ENCODE measurements at regions of chr13 and their contacts with region 1.

Region 1: GRCh38 chr13:25874907-25875306 is 176.9 kb downstream of the SHISA2 start:
- DNase-seq: peak; percentile 87
- H3K4me3 Mint-ChIP-seq: peak overlapping the region; percentile 40
- H3K27ac Mint-ChIP-seq: peak overlapping the region; percentile 87
- H3K4me1 Mint-ChIP-seq: peaks cover 70% of the 10 kb centered on the region
- H3K27me3 Mint-ChIP-seq: no peaks in the 10 kb centered on the region

Region 2: DNA sequence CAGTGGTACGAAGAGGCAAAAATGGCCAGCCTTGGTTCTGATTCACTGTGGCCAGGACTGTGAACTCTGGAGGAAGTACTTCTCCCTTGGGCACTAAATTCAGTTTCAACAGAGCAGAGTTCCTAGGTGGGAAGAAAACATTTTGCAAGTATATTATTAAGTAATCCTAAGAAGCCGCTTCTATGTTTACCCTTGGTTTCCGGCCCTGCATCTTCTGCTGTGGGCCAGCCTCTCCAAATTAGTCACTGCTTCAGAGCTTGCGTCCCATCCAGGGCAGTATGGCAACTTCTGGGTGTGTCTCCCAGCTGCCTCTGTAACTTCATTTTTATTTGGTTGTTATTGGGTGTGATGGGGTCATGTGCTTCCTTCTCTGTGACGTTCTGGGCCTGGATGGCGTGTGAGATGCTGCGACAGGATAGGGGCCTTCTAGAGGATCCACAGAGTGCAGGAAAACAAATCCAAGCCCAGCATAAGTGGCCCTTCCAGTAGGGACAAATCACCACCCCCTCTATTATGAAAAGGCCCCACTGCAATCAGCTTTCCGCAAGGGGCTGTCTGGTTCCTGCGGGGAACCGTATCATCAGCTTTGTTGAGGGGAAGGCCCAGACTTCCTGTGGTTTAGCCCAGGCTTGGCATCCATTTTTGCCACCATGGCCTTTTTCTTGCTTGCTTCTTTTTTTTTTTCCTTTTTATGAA is 1620.6 kb before region 1 on chr13:
- CTCF ChIA-PET with region 1: no interaction called
- intact Hi-C with region 1: loop called (anchors 10 kb)
- DNase-seq: peak; percentile 79
- H3K4me3 Mint-ChIP-seq: peak overlapping the region; percentile 87
- H3K27ac Mint-ChIP-seq: peak overlapping the region; percentile 96
- H3K4me1 Mint-ChIP-seq: peaks cover 77% of the 10 kb centered on the region
- H3K27me3 Mint-ChIP-seq: no peaks in the 10 kb centered on the region

Region 3: GRCh38 chr13:25847145-25847544 is 27.8 kb before region 1 on chr13:
- CTCF ChIA-PET with region 1: no interaction called
- intact Hi-C with region 1: loop called (anchors 1 kb)
- DNase-seq: peak; percentile 22
- H3K4me3 Mint-ChIP-seq: no peak overlapping the region
- H3K27ac Mint-ChIP-seq: peak overlapping the region; percentile 22
- H3K4me1 Mint-ChIP-seq: peaks cover 35% of the 10 kb centered on the region
- H3K27me3 Mint-ChIP-seq: peaks cover under 1% of the 10 kb centered on the region

Region 4: GRCh38 chr13:25886438-25887214 is 11.7 kb after region 1 on chr13:
- CTCF ChIA-PET with region 1: no interaction called
- intact Hi-C with region 1: loop called (anchors 1 kb)
- DNase-seq: peak; percentile 51
- H3K4me3 Mint-ChIP-seq: no peak overlapping the region
- H3K27ac Mint-ChIP-seq: peak overlapping the region; percentile 16
- H3K4me1 Mint-ChIP-seq: peaks cover 66% of the 10 kb centered on the region
- H3K27me3 Mint-ChIP-seq: no peaks in the 10 kb centered on the region

Region 5: DNA sequence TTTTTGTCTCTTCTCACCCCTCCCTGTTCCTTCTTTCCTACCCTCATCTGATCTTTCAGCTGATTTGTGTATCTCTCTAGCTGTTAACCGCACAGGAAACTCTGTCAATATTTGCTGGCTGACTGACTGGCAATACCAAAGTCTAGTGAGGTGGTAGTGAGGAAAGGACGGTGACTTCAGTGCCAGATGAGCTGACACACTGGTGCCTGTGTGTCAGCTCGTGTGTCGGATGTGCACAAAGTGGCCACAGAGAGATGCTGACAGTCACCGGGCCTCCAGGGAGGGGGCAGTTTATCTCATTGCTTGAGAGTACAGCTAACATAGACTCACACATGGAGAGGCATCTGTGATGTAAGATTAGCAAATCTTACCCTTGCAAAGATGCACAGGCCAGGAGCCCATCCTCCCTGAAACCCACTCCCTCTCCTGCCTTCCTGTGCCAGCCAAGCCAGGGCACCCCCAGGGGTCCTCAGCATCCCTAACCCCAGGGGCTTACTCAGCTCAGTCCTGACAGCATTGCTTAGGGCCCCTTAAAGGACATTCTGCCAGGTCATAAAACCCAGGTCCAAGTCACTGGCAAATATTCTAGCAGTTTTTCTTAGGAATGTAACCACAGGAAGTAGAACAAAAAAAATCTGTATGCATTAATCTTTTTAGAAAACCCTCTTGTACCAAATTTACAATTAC is 96.7 kb after region 1 on chr13:
- CTCF ChIA-PET with region 1: no interaction called
- intact Hi-C with region 1: loop called (anchors 2 kb)
- DNase-seq: peak; percentile 76
- H3K4me3 Mint-ChIP-seq: no peak overlapping the region
- H3K27ac Mint-ChIP-seq: peak overlapping the region; percentile 46
- H3K4me1 Mint-ChIP-seq: peaks cover 42% of the 10 kb centered on the region
- H3K27me3 Mint-ChIP-seq: no peaks in the 10 kb centered on the region

Region 6: DNA sequence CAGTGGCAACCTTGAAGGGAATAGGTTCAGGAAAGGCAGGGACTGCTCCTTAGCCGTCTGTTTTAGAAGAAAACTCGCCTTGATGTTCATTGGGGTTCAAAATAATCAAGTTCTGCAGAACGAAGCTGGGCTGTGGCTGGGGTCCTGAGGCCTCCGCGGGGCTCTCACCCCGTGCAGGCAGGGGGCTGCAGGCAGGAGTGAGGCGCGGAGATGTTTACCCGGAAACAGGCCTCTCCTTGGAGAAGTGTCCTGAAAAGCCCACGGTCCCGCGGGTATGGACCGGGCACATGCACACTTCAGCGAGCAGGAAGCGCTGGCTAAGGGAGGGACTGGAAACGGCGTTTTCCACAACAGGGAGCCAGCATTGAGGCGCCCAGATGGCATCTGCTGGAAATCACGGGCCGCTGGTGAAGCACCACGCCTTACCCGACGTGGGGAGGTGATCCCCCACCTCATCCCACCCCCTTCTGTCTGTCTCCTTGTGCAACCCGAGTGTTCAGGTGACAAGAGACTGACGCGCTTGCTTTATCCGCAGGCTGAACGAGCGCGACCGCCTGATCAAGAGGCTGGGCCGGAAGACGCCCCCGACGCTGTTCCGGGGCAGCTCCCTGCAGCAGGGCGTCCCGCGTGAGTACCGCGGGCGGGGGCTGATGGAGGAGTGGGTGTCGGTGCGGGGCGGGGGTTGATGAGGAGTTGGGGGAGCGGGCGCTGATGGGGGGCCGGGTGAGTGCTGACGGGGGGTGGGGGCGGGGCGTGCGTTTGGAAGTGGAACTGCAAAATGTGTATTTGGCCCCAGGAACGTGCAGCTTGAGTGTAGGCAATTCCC is 137.3 kb after region 1 on chr13:
- CTCF ChIA-PET with region 1: no interaction called
- intact Hi-C with region 1: loop called (anchors 5 kb)
- DNase-seq: peak; percentile 70
- H3K4me3 Mint-ChIP-seq: peak overlapping the region; percentile 74
- H3K27ac Mint-ChIP-seq: peak overlapping the region; percentile 72
- H3K4me1 Mint-ChIP-seq: peaks cover 25% of the 10 kb centered on the region
- H3K27me3 Mint-ChIP-seq: no peaks in the 10 kb centered on the region

Region 7: DNA sequence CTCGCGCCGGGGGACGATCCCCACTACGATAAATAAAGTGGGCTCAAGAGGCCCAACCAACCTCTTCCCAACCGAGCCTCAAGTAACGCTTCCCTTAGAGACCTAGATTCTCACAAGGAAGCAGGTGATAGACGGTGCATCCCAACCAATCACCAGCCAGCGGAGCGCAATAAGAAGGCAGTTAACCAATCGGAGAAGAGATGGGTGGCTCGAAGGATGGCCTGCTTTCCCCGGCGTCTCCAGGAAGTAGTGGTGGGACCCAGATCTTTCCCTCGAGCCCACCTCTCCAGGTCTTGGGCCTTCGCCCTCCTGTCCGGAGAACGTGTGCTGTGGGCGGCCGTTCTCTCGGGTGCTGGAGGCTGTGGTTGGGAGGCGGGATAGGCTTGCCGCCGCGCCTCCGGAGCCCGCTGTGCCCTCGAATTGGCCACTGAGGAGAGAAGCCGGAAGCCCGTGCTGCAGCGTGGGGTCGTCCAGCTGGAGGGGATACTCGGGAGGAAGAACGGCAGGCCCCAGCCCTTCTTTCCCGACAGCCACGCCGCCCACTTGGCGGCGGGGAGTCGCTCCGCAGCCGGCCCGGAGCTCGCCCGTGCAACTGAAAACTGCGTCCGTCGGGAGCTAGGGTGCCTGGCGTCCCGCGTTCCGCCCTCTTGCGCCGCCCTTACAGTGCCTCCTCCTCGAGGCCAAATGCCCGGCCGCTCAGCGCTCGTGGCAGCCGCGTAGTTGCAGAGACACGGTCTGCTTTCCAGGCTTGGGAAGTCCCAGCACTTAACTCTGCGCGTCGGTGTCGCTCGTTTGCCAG is 347.0 kb after region 1 on chr13 and contains the start of gene RNF6:
- CTCF ChIA-PET with region 1: no interaction called
- intact Hi-C with region 1: loop called (anchors 10 kb)
- DNase-seq: peak; percentile 92
- H3K4me3 Mint-ChIP-seq: peak within 1 kb of the TSS; percentile 91
- H3K27ac Mint-ChIP-seq: peak within 1 kb of the TSS; percentile 100
- H3K4me1 Mint-ChIP-seq: peaks cover 30% of the 10 kb centered on the region
- H3K27me3 Mint-ChIP-seq: peaks cover 2% of the 10 kb centered on the region
- total RNA-seq, gene RNF6: 38.2 to 39.4 TPM